H1 (cell line): ENCODE measurements at regions of chr4 and their contacts with region 1.

Region 1: DNA sequence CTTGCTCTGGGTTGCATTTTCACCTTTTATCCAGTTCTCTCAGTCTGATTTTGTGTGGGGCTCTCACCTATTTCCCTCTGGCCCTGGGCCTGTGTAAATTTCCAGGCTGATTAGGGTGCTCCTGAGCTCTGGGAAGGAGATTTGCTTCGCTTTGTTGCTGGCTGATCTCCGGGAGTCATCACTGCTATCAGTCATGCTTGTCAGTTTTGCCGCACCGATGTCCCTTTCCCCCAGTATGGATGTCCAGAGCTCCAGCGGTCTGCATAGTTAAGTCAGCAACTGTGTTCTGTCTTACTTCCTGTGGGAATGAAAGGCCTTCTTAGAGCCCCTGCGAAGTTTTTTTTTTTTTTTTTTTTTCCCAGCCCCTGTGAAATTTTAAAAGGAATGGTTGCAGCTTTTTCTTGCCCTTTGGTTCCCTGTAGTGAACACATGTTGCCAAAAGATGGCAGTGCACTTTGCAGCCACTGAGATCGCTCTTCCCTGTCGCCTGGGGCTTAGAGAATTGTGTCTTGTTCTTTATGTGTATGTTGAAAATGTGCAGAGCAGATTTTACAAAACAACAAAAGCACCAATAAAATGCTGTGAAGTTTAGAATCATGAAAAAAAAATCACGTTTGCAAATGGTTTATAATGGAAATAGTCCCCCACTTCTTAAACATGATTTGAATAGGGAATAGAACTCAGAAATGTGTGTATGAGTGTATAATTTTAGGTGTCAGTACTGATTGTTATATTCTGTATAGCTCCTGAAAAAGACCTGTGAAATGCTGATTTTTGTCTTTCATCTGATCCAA is 109.1 kb upstream of the SLC4A4 start:
- DNase-seq: peak in 1 of 2 experiments; percentile 5
- H3K4me3 ChIP-seq: no peak overlapping the region
- H3K27ac ChIP-seq: no peak overlapping the region
- H3K4me1 ChIP-seq: peaks cover 0 to 9% (median 5%) of the 10 kb centered on the region in 4 experiments; a peak in 4 of 7 replicates
- H3K27me3 ChIP-seq: no peaks in the 10 kb centered on the region
- CTCF ChIP-seq: peak; percentile 51 to 66 (median 60)
- EP300 ChIP-seq: no peak
- POLR2A ChIP-seq: no peak
- RAD21 ChIP-seq: peak; percentile 70 to 72

Region 2: GRCh38 chr4:70976252-70976651 is 253.4 kb before region 1 on chr4:
- CTCF ChIA-PET with region 1: no interaction called
- POLR2A ChIA-PET with region 1: no interaction called
- DNase-seq: no peak
- H3K4me3 ChIP-seq: no peak overlapping the region
- H3K27ac ChIP-seq: no peak overlapping the region
- H3K4me1 ChIP-seq: no peaks in the 10 kb centered on the region
- H3K27me3 ChIP-seq: no peaks in the 10 kb centered on the region
- CTCF ChIP-seq: no peak
- EP300 ChIP-seq: no peak
- POLR2A ChIP-seq: no peak
- RAD21 ChIP-seq: no peak

Region 3: DNA sequence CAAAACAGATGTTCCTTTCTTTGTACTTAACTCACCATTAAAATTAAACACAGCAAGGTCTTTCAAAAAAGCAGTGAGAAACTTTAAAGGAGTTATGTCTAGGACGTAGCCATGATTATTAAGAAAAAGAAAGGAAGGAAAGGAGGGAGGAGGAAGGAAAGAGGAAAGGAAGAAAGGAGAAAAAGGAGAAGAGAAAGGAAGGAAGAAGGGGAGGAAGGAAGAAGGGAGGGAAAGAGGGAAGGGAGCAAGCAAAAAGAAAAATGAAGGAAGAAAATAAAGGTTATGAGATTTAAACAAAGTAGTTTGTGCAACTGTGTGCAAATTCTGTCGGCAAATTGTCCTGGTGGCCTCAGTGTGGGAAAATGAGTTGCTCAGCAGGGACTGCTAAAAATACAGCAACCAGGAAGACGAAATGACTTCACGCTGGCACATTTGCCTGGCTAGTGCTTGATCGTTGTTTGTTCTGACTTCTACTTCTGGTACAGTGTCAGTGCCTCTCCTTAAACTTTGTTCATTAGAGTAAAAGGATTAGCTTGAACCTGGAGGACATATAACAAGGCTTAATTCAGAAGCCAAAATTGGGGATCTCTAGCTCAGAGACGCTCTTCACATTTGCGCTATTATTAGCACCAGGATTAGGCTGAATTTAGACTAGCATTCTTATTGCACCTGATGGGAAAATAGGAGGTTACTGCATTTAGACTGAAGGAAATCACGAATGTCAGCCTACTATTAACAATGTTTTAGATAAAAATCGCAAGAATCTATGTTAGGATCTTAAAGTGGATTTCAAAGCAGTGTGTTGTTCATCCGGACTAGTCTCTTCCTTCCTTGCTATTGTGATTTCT is 155.0 kb before region 1 on chr4:
- CTCF ChIA-PET with region 1: no interaction called
- POLR2A ChIA-PET with region 1: no interaction called
- DNase-seq: no peak
- H3K4me3 ChIP-seq: no peak overlapping the region
- H3K27ac ChIP-seq: no peak overlapping the region
- H3K4me1 ChIP-seq: no peaks in the 10 kb centered on the region
- H3K27me3 ChIP-seq: no peaks in the 10 kb centered on the region
- CTCF ChIP-seq: no peak
- EP300 ChIP-seq: no peak
- POLR2A ChIP-seq: no peak
- RAD21 ChIP-seq: no peak

Region 4: DNA sequence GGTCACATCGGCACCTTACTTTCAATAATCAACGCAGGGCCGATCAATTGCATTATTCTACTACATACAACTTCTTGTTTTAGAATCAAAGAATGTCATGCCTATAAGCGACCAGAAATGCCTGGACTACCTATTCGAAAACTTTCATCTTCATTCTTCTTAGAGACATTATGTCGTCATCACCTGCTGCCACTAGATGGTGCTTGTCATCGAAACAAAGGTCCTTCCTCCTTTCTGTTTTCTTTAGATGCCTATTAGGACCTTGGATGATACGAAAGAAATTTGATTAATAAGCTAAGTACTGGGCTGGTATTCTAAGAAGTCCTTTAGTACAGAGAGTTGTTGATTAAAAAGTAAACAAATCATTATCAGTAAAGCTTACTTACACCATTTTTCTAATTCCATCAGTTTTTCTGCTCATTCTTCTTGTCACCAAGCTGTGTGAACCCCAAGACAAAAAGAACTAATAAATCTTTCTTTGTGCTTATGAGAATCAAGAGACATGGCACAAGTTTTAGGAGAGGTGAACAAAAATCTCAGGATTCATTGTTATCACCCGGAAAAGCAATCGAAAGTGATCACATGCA is 45.4 kb before region 1 on chr4:
- CTCF ChIA-PET with region 1: interaction called, 17 read pairs
- POLR2A ChIA-PET with region 1: no interaction called
- DNase-seq: no peak
- H3K4me3 ChIP-seq: no peak overlapping the region
- H3K27ac ChIP-seq: no peak overlapping the region
- H3K4me1 ChIP-seq: 0 out of 7 replicates have a peak, but pooled peaks cover 0 to 4% (median 2%) of the 10 kb centered on the region in 4 experiments
- H3K27me3 ChIP-seq: peaks cover 3 to 27% (median 17%) of the 10 kb centered on the region in 4 experiments
- CTCF ChIP-seq: peak in 2 of 3 experiments; percentile 37 to 66; a peak in 2 of 4 replicates
- EP300 ChIP-seq: no peak
- POLR2A ChIP-seq: no peak
- RAD21 ChIP-seq: peak; percentile 63 to 68

Region 5: DNA sequence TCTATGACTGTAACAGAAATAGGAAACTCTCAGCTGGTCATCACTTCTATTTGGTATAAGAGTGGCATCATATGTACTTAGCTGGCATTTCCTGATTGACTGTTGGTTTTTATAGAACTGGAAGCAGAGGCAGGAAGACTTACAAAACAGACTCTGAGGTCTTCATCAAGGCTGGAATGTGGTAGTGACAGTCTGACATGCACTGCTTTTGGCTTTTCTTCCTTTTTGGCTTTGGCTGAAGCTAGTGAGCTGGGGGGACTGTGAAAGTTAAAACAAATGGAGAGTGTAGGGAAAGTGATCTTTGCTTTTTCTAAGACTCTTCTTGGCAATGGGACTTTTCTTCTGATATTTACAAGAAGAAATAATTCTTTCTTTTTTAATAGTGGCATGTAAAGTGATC is 12.0 kb before region 1 on chr4:
- CTCF ChIA-PET with region 1: interaction called, 69 read pairs
- POLR2A ChIA-PET with region 1: no interaction called
- DNase-seq: no peak
- H3K4me3 ChIP-seq: no peak overlapping the region
- H3K27ac ChIP-seq: no peak overlapping the region
- H3K4me1 ChIP-seq: no peaks in the 10 kb centered on the region
- H3K27me3 ChIP-seq: peaks cover 0 to 1% (median 0%) of the 10 kb centered on the region in 4 experiments; a peak in 1 of 7 replicates
- CTCF ChIP-seq: no peak
- EP300 ChIP-seq: no peak
- POLR2A ChIP-seq: no peak
- RAD21 ChIP-seq: no peak

Region 6: DNA sequence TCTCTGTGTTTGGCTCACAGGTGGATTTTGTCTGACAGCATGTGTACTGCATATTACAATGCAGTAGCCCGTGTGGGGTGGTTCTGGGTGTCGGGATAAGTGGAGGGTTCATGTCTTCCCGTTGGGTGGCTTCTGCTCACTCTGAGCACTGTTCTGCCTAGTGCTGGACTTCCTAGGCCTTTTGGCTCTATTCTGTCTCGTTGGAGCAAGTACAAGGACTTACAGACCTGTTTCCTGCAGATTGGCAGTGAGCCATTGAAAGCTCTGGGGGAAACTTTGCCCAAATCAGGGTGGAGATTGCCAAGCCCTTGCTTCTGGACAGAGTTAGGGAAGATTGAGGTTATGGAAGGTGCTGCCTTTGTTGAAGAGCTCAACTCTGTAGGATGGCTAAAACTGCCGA is 18.0 kb after region 1 on chr4:
- CTCF ChIA-PET with region 1: interaction called, 13 read pairs
- POLR2A ChIA-PET with region 1: no interaction called
- DNase-seq: no peak
- H3K4me3 ChIP-seq: no peak overlapping the region
- H3K27ac ChIP-seq: no peak overlapping the region
- H3K4me1 ChIP-seq: no peaks in the 10 kb centered on the region
- H3K27me3 ChIP-seq: no peaks in the 10 kb centered on the region
- CTCF ChIP-seq: no peak
- EP300 ChIP-seq: no peak
- POLR2A ChIP-seq: no peak
- RAD21 ChIP-seq: no peak

Region 7: DNA sequence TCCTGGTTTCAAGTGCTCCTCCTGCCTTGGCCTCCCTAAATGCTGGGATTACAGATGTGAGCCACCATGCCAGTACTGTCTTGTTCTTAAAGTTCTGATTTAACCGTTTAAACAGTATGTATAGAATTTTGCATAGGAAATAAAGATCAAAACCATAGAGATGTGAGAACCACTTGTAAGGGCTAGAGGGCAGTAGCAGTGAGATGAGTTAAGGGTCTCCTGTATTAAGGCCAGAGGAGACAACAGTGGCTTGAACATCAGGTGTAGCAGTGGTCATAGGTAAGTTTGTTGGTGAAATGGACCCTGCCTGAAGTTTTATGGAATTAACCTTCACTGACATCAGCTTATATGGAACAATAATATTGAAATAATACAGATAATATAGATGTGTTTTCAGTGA is 264.9 kb after region 1 on chr4:
- CTCF ChIA-PET with region 1: interaction called, 10 read pairs
- POLR2A ChIA-PET with region 1: no interaction called
- DNase-seq: no peak
- H3K4me3 ChIP-seq: no peak overlapping the region
- H3K27ac ChIP-seq: no peak overlapping the region
- H3K4me1 ChIP-seq: no peaks in the 10 kb centered on the region
- H3K27me3 ChIP-seq: no peaks in the 10 kb centered on the region
- CTCF ChIP-seq: peak in 1 of 3 experiments; percentile 29; a peak in 1 of 4 replicates
- EP300 ChIP-seq: no peak
- POLR2A ChIP-seq: no peak
- RAD21 ChIP-seq: peak; percentile 30 to 36